PC-3 (cell line): ENCODE measurements at regions of chr9 and their contacts with region 1.

Region 1: DNA sequence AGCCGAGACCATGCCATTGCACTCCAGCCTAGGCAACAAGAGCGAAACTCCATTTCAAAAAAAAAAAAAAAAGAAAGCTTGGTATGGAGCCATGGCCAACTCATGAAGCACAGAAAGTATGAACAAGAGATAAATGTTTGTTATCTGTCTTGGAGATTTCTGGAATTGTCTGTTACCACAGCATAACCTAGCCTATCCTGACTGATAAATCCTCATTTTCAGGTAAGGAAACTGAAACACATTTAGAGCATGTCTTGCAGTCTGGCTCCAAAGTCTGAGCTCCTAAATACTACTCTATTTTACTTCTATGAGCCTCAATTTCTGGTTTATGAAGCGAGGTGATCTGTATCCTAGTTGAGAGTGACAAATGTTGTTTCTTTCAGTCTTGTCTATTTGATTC is 68.3 kb upstream of the SLC44A1 start:
- DNase-seq: no peak
- ATAC-seq: no peak
- H3K4me3 ChIP-seq: no peak overlapping the region
- H3K27ac ChIP-seq: no peak overlapping the region
- H3K4me1 ChIP-seq: no peaks in the 10 kb centered on the region
- H3K27me3 ChIP-seq: no peaks in the 10 kb centered on the region
- CTCF ChIP-seq: no peak

Region 2: GRCh38 chr9:105280691-105281090 is 104.5 kb after region 1 on chr9:
- CTCF ChIA-PET with region 1: no interaction called
- POLR2A ChIA-PET with region 1: interaction called, 14 read pairs
- intact Hi-C with region 1: no loop called
- DNase-seq: peak; percentile 45
- ATAC-seq: peak; percentile 64
- H3K4me3 ChIP-seq: no peak overlapping the region
- H3K27ac ChIP-seq: 0 out of 2 replicates have a peak overlapping the region, but pooled peaks have one; percentile 24
- H3K4me1 ChIP-seq: peaks cover 20% of the 10 kb centered on the region
- H3K27me3 ChIP-seq: no peaks in the 10 kb centered on the region
- CTCF ChIP-seq: no peak

Region 3: GRCh38 chr9:105309531-105309931 is 133.3 kb after region 1 on chr9:
- CTCF ChIA-PET with region 1: no interaction called
- POLR2A ChIA-PET with region 1: no interaction called
- intact Hi-C with region 1: no loop called
- DNase-seq: no peak
- ATAC-seq: no peak
- H3K4me3 ChIP-seq: no peak overlapping the region
- H3K27ac ChIP-seq: no peak overlapping the region
- H3K4me1 ChIP-seq: no peaks in the 10 kb centered on the region
- H3K27me3 ChIP-seq: no peaks in the 10 kb centered on the region
- CTCF ChIP-seq: no peak